ENCODE measurements at regions of chr1 and their contacts with region 1.

Region 1: GRCh38 chr1:248807067-248807737 is 18.5 kb downstream of the SH3BP5L start:
- DNase-seq: peak; percentile 77
- ATAC-seq: peak; percentile 56
- H3K4me3 ChIP-seq: no peak overlapping the region
- H3K4me3 Mint-ChIP-seq: peak overlapping the region; percentile 57
- H3K27ac ChIP-seq: no peak overlapping the region
- H3K27ac Mint-ChIP-seq: peak overlapping the region; percentile 99
- H3K4me1 ChIP-seq: peaks cover 47 to 54% of the 10 kb centered on the region in 2 donors
- H3K4me1 Mint-ChIP-seq: peaks cover 46% of the 10 kb centered on the region
- H3K27me3 ChIP-seq: no peaks in the 10 kb centered on the region
- H3K27me3 Mint-ChIP-seq: no peaks in the 10 kb centered on the region
- CTCF ChIP-seq: peak; percentile 92

Region 2: DNA sequence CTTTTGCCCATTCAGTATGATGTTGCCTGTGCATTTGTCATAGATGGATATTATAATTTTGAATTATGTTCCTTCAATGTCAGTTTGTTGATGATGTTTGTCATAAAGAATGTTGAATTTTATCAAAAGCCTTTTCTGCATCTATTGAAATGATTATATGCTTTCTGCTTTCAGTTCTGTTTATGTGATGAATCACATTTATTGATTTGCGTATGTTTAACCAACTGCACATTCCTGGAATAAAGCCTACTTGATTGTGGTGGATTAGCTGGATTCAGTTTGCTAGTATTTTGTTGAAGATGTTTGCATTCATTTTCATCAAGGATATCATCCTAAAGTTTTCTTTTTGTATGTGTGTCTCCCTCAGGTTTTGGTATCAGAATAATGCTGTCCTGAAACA is 581.7 kb before region 1 on chr1:
- CTCF ChIA-PET with region 1: no interaction called
- POLR2A ChIA-PET with region 1: no interaction called
- intact Hi-C with region 1: no loop called
- DNase-seq: no peak
- ATAC-seq: no peak
- H3K4me3 ChIP-seq: no peak overlapping the region
- H3K4me3 Mint-ChIP-seq: no peak overlapping the region
- H3K27ac ChIP-seq: no peak overlapping the region
- H3K27ac Mint-ChIP-seq: no peak overlapping the region
- H3K4me1 ChIP-seq: no peaks in the 10 kb centered on the region
- H3K4me1 Mint-ChIP-seq: no peaks in the 10 kb centered on the region
- H3K27me3 ChIP-seq: no peaks in the 10 kb centered on the region
- H3K27me3 Mint-ChIP-seq: no peaks in the 10 kb centered on the region
- CTCF ChIP-seq: no peak

Region 3: GRCh38 chr1:248243204-248243603 is 564.0 kb before region 1 on chr1:
- CTCF ChIA-PET with region 1: interaction called, 11 read pairs
- POLR2A ChIA-PET with region 1: no interaction called
- intact Hi-C with region 1: no loop called
- DNase-seq: peak; percentile 65
- ATAC-seq: peak; percentile 36
- H3K4me3 ChIP-seq: no peak overlapping the region
- H3K4me3 Mint-ChIP-seq: no peak overlapping the region
- H3K27ac ChIP-seq: no peak overlapping the region
- H3K27ac Mint-ChIP-seq: no peak overlapping the region
- H3K4me1 ChIP-seq: peaks cover 3 to 4% of the 10 kb centered on the region in 2 donors
- H3K4me1 Mint-ChIP-seq: peaks cover 2% of the 10 kb centered on the region
- H3K27me3 ChIP-seq: peaks cover 0 to 8% (median 2%) of the 10 kb centered on the region in 4 experiments
- H3K27me3 Mint-ChIP-seq: peaks cover 25% of the 10 kb centered on the region
- CTCF ChIP-seq: peak; percentile 87

Region 4: DNA sequence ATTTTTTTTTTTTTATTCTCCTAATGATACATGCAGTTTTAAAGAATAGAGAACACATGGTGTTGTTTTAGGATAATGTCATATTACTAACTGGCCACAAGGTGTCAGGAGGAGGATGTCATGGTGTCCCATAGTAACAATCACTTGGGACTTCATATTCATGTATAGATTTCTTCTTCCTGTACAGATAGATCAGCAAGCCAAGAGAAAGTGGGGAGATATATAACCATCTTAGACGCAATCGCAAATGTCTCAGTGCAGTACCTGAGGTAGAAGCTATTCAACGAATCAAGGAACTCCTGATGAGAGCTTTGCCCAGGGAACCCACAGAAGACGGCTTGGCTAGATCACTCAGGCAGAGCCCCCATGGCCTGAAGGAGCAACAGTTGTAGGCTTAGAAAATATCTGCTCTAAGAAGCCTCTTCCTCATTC is 184.6 kb before region 1 on chr1:
- CTCF ChIA-PET with region 1: interaction called, 315 read pairs
- POLR2A ChIA-PET with region 1: interaction called, 5 read pairs
- intact Hi-C with region 1: loop called (anchors 1 kb)
- DNase-seq: peak; percentile 68
- ATAC-seq: peak; percentile 93
- H3K4me3 ChIP-seq: no peak overlapping the region
- H3K4me3 Mint-ChIP-seq: peak overlapping the region; percentile 56
- H3K27ac ChIP-seq: peak overlapping the region; percentile 21 to 25
- H3K27ac Mint-ChIP-seq: peak overlapping the region; percentile 90
- H3K4me1 ChIP-seq: peaks cover 6 to 7% of the 10 kb centered on the region in 2 donors
- H3K4me1 Mint-ChIP-seq: peaks cover 11% of the 10 kb centered on the region
- H3K27me3 ChIP-seq: no peaks in the 10 kb centered on the region
- H3K27me3 Mint-ChIP-seq: no peaks in the 10 kb centered on the region
- CTCF ChIP-seq: peak; percentile 89

Region 5: GRCh38 chr1:248686815-248687214 is 120.4 kb before region 1 on chr1:
- CTCF ChIA-PET with region 1: interaction called, 274 read pairs
- POLR2A ChIA-PET with region 1: interaction called, 3 read pairs
- intact Hi-C with region 1: no loop called
- DNase-seq: peak; percentile 75
- ATAC-seq: peak; percentile 79
- H3K4me3 ChIP-seq: no peak overlapping the region
- H3K4me3 Mint-ChIP-seq: peak overlapping the region; percentile 8
- H3K27ac ChIP-seq: no peak overlapping the region
- H3K27ac Mint-ChIP-seq: no peak overlapping the region
- H3K4me1 ChIP-seq: peaks cover 0 to 8% of the 10 kb centered on the region in 2 donors
- H3K4me1 Mint-ChIP-seq: peaks cover 15% of the 10 kb centered on the region
- H3K27me3 ChIP-seq: no peaks in the 10 kb centered on the region
- H3K27me3 Mint-ChIP-seq: peaks cover 2% of the 10 kb centered on the region
- CTCF ChIP-seq: peak; percentile 78

Region 6: GRCh38 chr1:248786156-248786555 is 21.0 kb before region 1 on chr1:
- CTCF ChIA-PET with region 1: interaction called, 74 read pairs
- POLR2A ChIA-PET with region 1: interaction called, 3 read pairs
- intact Hi-C with region 1: no loop called
- DNase-seq: no peak
- ATAC-seq: peak; percentile 31
- H3K4me3 ChIP-seq: no peak overlapping the region
- H3K4me3 Mint-ChIP-seq: peak overlapping the region; percentile 26
- H3K27ac ChIP-seq: peak overlapping the region in 1 of 2 donors; percentile 55
- H3K27ac Mint-ChIP-seq: peak overlapping the region; percentile 72
- H3K4me1 ChIP-seq: peaks cover 43 to 46% of the 10 kb centered on the region in 2 donors
- H3K4me1 Mint-ChIP-seq: peaks cover 40% of the 10 kb centered on the region
- H3K27me3 ChIP-seq: no peaks in the 10 kb centered on the region
- H3K27me3 Mint-ChIP-seq: no peaks in the 10 kb centered on the region
- CTCF ChIP-seq: no peak

Region 7: GRCh38 chr1:248825909-248826760 is 18.9 kb after region 1 on chr1 and contains the start of gene SH3BP5L:
- CTCF ChIA-PET with region 1: interaction called, 22 read pairs
- POLR2A ChIA-PET with region 1: interaction called, 9 read pairs
- intact Hi-C with region 1: loop called (anchors 2 kb)
- DNase-seq: peak; percentile 98
- ATAC-seq: peak; percentile 84
- H3K4me3 ChIP-seq: peak within 1 kb of the TSS; percentile 86 to 99 (median 93)
- H3K4me3 Mint-ChIP-seq: peak within 1 kb of the TSS; percentile 95
- H3K27ac ChIP-seq: peak within 1 kb of the TSS; percentile 98
- H3K27ac Mint-ChIP-seq: peak within 1 kb of the TSS; percentile 96
- H3K4me1 ChIP-seq: peaks cover 52 to 54% of the 10 kb centered on the region in 2 donors
- H3K4me1 Mint-ChIP-seq: peaks cover 57% of the 10 kb centered on the region
- H3K27me3 ChIP-seq: no peaks in the 10 kb centered on the region
- H3K27me3 Mint-ChIP-seq: no peaks in the 10 kb centered on the region
- CTCF ChIP-seq: peak; percentile 84
- total RNA-seq, gene SH3BP5L: 35.7 and 36.5 TPM in 2 replicates

Region 8: DNA sequence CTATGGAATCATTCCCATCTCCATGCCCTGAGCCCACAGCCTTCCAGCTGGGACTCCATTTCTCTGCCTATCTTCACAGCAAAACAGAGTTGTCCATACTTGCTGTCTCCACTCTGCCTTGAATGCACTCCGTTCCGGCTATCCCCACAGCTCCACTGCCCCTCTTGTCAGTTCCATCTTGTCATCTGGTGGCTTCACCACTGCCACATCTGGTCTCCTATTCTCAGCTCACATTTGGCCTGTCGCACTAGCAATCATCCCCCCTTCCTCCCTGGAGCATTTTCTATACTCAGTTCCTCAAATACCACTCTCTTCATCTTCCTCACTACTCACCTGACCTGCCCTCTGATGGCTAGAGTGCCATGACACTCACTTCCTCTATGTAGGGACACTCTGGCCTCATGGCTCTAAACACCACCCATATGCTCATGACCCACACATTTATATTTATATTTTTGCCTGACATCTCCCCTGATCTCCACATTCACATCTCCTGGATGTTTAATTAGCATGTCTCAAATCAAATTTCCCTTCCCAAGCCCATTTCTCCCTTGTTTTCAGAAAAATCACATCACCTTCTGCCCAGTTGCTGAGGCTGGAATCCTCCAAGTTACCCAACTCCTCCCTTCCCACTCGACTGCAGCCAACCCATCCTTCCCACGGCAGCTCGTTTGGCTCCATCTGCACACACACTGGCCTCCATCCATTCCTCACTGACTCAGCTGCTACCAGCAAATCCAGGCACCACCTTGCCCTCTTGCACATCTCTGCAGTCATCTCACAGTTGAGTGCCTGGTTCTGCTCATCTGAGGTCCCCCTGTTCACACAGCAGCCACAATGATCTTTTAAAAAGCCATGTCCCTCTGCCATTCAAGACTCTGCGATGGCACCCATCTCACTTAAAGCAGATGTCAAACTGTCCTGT is 45.5 kb after region 1 on chr1:
- CTCF ChIA-PET with region 1: no interaction called
- POLR2A ChIA-PET with region 1: no interaction called
- intact Hi-C with region 1: no loop called
- DNase-seq: peak; percentile 58
- ATAC-seq: peak; percentile 54
- H3K4me3 ChIP-seq: no peak overlapping the region
- H3K4me3 Mint-ChIP-seq: no peak overlapping the region
- H3K27ac ChIP-seq: peak overlapping the region; percentile 27 to 68
- H3K27ac Mint-ChIP-seq: no peak overlapping the region
- H3K4me1 ChIP-seq: peaks cover 19 to 29% of the 10 kb centered on the region in 2 donors
- H3K4me1 Mint-ChIP-seq: peaks cover 24% of the 10 kb centered on the region
- H3K27me3 ChIP-seq: no peaks in the 10 kb centered on the region
- H3K27me3 Mint-ChIP-seq: no peaks in the 10 kb centered on the region
- CTCF ChIP-seq: no peak

Measured in B cell (primary cell).